Activated T-helper 2 cell treated with anti-CD3 and anti-CD28 coated beads, Interferon-gamma antibody, Interleukin-2, Interleukin-4, amounts not matched to agents 10 μg/mL and 5 μg/mL and 100 μg/mL, durations not matched to agents 14 hours and 24 hours and 36 hours (primary cell): ENCODE measurements at regions of chr2 and their contacts with region 1.

Region 1: GRCh38 chr2:55014962-55015939 is 35.0 kb downstream of the RTN4 start:
- DNase-seq: no peak
- H3K4me3 Mint-ChIP-seq: no peak overlapping the region
- H3K27ac Mint-ChIP-seq: no peak overlapping the region
- H3K4me1 Mint-ChIP-seq: peaks cover 36% of the 10 kb centered on the region
- H3K27me3 Mint-ChIP-seq: no peaks in the 10 kb centered on the region

Region 2: DNA sequence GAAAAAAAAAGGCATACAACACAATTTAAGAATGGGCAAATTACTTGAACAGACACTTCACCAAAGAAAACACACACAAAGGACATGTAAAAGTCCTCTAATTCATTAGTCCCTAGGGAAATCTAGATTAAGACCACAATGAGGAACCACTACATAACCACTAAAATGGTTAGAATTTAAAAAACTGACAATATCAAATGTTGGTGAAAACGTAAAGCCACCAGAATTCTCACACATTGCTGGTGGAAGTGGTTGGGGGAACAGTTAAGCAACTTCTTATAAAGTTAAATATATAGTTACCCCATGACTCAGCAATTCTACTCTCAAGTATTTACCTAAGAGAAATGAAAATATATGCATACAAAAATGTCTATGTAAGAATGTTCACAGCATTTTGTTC is 23.2 kb after region 1 on chr2:
- intact Hi-C with region 1: no loop called
- DNase-seq: no peak
- H3K4me3 Mint-ChIP-seq: no peak overlapping the region
- H3K27ac Mint-ChIP-seq: no peak overlapping the region
- H3K4me1 Mint-ChIP-seq: peaks cover 33% of the 10 kb centered on the region
- H3K27me3 Mint-ChIP-seq: no peaks in the 10 kb centered on the region

Region 3: DNA sequence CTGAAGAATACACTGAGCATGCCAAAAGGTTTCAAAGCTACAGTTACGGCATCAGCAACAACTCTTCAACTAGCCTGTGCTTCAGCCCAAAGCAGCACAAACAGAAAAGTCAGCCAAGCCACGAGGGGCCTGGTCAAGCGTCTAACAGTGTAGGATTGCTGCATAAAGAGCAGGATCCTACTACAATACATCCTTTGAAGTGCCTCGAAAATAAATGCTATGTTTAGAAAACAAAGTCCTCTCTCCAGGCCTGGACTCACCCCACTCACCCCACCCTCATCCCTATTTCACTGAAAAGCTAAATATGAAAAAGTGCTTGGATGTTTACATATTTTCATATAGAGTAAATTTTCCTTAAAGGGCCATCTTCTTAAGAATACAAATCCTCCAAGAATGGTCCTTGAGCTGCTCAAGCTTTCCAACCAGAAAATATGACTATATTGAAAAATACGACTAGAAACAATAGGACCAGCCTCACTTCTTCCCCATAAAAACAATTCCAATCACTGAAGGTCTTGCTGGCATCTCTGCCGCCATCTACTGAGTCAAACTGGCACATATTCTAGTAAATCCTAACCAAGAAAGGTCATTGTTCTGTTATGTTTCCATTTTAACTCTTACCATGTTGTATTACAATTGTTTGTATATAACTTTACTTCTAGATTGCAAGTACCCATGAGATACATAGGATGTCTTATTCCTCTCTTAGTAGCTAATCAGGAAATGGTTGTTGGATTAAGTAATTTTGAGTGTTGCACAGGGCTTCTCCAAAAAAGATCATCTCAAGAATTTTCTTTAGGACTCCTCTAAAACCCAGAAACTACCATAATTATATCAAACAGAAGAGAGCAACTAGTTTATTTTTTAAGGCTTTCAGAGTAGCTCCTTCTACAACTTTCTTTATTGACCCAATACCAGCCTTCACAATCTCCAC is 153.2 kb after region 1 on chr2:
- intact Hi-C with region 1: loop called (anchors 1 kb)
- DNase-seq: no peak
- H3K4me3 Mint-ChIP-seq: no peak overlapping the region
- H3K27ac Mint-ChIP-seq: no peak overlapping the region
- H3K4me1 Mint-ChIP-seq: peaks cover 2% of the 10 kb centered on the region
- H3K27me3 Mint-ChIP-seq: no peaks in the 10 kb centered on the region

Region 4: GRCh38 chr2:55175254-55176025 is 160.2 kb after region 1 on chr2:
- intact Hi-C with region 1: loop called (anchors 1 kb)
- DNase-seq: no peak
- H3K4me3 Mint-ChIP-seq: no peak overlapping the region
- H3K27ac Mint-ChIP-seq: no peak overlapping the region
- H3K4me1 Mint-ChIP-seq: no peaks in the 10 kb centered on the region
- H3K27me3 Mint-ChIP-seq: peaks cover 2% of the 10 kb centered on the region